GM12878 (cell line): ENCODE measurements at regions of chr3 and their contacts with region 1.

Region 1: GRCh38 chr3:71087143-71088018 is 496.1 kb downstream of the FOXP1 start:
- DNase-seq: peak; percentile 80
- ATAC-seq: peak; percentile 88
- H3K4me3 ChIP-seq: no peak overlapping the region
- H3K27ac ChIP-seq: peak overlapping the region; percentile 81
- H3K4me1 ChIP-seq: peaks cover 34% of the 10 kb centered on the region
- H3K27me3 ChIP-seq: no peaks in the 10 kb centered on the region
- CTCF ChIP-seq: no peak
- EP300 ChIP-seq: peak; percentile 6 to 80; a peak in 3 of 4 replicates
- POLR2A ChIP-seq: no peak
- RAD21 ChIP-seq: peak; percentile 9; the same call in 1 of the 2 replicates

Region 2: GRCh38 chr3:70947579-70947978 is 139.8 kb before region 1 on chr3:
- CTCF ChIA-PET with region 1: no interaction called
- POLR2A ChIA-PET with region 1: no interaction called
- RAD21 ChIA-PET with region 1: no interaction called
- SMC1A ChIA-PET with region 1: no interaction called
- in situ Hi-C with region 1: no loop called
- intact Hi-C with region 1: no loop called
- DNase-seq: no peak
- ATAC-seq: no peak
- H3K4me3 ChIP-seq: no peak overlapping the region
- H3K27ac ChIP-seq: no peak overlapping the region
- H3K4me1 ChIP-seq: no peaks in the 10 kb centered on the region
- H3K27me3 ChIP-seq: no peaks in the 10 kb centered on the region
- CTCF ChIP-seq: no peak
- EP300 ChIP-seq: no peak
- POLR2A ChIP-seq: no peak
- RAD21 ChIP-seq: no peak

Region 3: GRCh38 chr3:71149959-71150954 is 62.9 kb after region 1 on chr3:
- CTCF ChIA-PET with region 1: no interaction called
- POLR2A ChIA-PET with region 1: no interaction called
- RAD21 ChIA-PET with region 1: no interaction called
- SMC1A ChIA-PET with region 1: no interaction called
- in situ Hi-C with region 1: no loop called
- intact Hi-C with region 1: loop called (anchors 2 kb)
- DNase-seq: no peak
- ATAC-seq: peak; percentile 21; the same call in 1 of the 3 replicates
- H3K4me3 ChIP-seq: no peak overlapping the region
- H3K27ac ChIP-seq: no peak overlapping the region
- H3K4me1 ChIP-seq: no peaks in the 10 kb centered on the region
- H3K27me3 ChIP-seq: no peaks in the 10 kb centered on the region
- CTCF ChIP-seq: no peak
- EP300 ChIP-seq: no peak
- POLR2A ChIP-seq: no peak
- RAD21 ChIP-seq: no peak

Region 4: DNA sequence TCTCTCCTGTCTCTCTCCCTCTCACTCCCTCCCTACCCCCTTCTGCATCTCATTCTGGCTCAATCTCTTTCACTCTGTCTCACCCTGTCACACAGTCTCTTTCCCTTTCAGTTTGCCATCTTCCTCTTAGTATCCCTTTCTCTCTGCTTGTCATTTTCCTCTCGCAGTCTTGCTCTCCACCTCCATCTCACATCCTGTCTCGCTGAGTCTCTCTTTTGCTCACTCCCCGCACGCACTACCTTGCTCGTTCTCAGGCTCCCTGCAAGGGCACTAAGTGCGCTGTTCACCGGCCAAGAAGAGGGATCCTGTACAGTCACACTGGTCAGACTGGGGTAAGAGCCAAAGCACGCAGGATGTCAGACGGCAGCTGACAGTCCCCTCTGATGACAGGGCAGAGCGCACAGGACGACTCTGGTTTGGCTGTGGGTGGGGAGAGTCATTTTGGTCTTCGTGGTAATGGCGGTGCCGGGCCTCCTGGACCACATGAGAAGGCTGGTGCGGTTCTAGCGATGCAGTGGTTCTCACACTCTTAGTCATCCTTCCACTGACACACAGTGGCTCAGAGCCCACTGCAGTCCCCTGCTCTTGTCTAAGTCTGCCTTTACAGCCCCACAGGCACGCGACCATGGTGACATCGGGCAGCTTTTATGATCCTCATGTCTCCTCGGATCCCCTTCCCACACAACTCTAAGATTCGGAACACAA is 139.3 kb after region 1 on chr3:
- CTCF ChIA-PET with region 1: no interaction called
- POLR2A ChIA-PET with region 1: no interaction called
- RAD21 ChIA-PET with region 1: no interaction called
- SMC1A ChIA-PET with region 1: no interaction called
- in situ Hi-C with region 1: no loop called
- intact Hi-C with region 1: loop called (anchors 2 kb)
- DNase-seq: peak; percentile 28
- ATAC-seq: peak; percentile 95
- H3K4me3 ChIP-seq: peak overlapping the region; percentile 52
- H3K27ac ChIP-seq: no peak overlapping the region
- H3K4me1 ChIP-seq: peaks cover 14% of the 10 kb centered on the region
- H3K27me3 ChIP-seq: peaks cover 2 to 7% of the 10 kb centered on the region in 2 experiments; a peak in 2 of 4 replicates
- CTCF ChIP-seq: no peak
- EP300 ChIP-seq: peak; percentile 53 to 63; a peak in 2 of 4 replicates
- POLR2A ChIP-seq: no peak
- RAD21 ChIP-seq: no peak

Region 5: DNA sequence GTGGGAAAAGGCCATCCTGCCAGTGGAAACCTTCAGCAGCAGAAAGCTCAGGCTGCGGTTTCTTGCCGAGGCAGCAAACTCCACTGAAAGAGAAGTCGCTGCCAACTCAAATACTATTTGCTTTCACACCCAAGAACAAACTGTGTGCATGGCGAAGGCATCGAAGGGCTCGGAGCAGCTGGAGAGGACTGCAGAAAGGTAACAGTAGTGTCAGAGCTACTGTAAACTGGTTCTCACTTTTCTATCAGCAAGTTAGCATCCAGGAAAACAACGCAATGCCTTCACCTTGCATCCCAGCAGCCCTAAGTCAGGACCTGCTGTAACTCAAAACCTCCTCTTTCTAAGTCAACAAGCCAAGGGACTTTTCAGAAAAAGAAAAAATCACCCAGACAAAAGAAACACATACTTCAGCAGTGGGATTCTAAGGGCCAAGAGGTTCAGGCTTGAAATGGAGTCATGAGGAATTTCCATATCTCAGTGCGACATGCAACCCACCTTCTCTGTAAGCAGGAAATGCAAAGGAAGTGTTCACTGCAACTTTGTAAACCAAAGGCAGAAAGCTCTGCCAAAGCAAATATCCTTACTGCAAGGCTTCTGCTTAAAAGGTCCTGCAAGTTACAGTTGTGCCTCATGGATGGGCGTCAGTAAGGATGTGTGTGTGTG is 302.7 kb after region 1 on chr3:
- CTCF ChIA-PET with region 1: no interaction called
- POLR2A ChIA-PET with region 1: no interaction called
- RAD21 ChIA-PET with region 1: no interaction called
- SMC1A ChIA-PET with region 1: no interaction called
- in situ Hi-C with region 1: loop called (anchors 10 kb)
- intact Hi-C with region 1: loop called (anchors 2 kb)
- DNase-seq: no peak
- ATAC-seq: no peak
- H3K4me3 ChIP-seq: no peak overlapping the region
- H3K27ac ChIP-seq: no peak overlapping the region
- H3K4me1 ChIP-seq: peaks cover 27% of the 10 kb centered on the region
- H3K27me3 ChIP-seq: no peaks in the 10 kb centered on the region
- CTCF ChIP-seq: no peak
- EP300 ChIP-seq: no peak
- POLR2A ChIP-seq: no peak
- RAD21 ChIP-seq: no peak

Region 6: GRCh38 chr3:71397046-71397445 is 309.7 kb after region 1 on chr3:
- CTCF ChIA-PET with region 1: no interaction called
- POLR2A ChIA-PET with region 1: no interaction called
- RAD21 ChIA-PET with region 1: no interaction called
- SMC1A ChIA-PET with region 1: no interaction called
- in situ Hi-C with region 1: loop called (anchors 10 kb)
- intact Hi-C with region 1: loop called (anchors 2 kb)
- DNase-seq: no peak
- ATAC-seq: no peak
- H3K4me3 ChIP-seq: no peak overlapping the region
- H3K27ac ChIP-seq: no peak overlapping the region
- H3K4me1 ChIP-seq: peaks cover 13% of the 10 kb centered on the region
- H3K27me3 ChIP-seq: peaks cover 0 to 4% of the 10 kb centered on the region in 2 experiments; a peak in 2 of 4 replicates
- CTCF ChIP-seq: peak; percentile 27 to 63 (median 46); a peak in 4 of 6 replicates
- EP300 ChIP-seq: no peak
- POLR2A ChIP-seq: no peak
- RAD21 ChIP-seq: peak; percentile 39; the same call in 1 of the 2 replicates